A673 (cell line): ENCODE measurements at regions of chr7 and their contacts with region 1.

Region 1: GRCh38 chr7:37901236-37901827 is 15.3 kb downstream of the SFRP4 start:
- DNase-seq: peak; percentile 65
- H3K4me3 ChIP-seq: no peak overlapping the region
- H3K27ac ChIP-seq: no peak overlapping the region
- H3K4me1 ChIP-seq: no peaks in the 10 kb centered on the region
- H3K27me3 ChIP-seq: peaks cover 2% of the 10 kb centered on the region
- CTCF ChIP-seq: peak; percentile 73

Region 2: GRCh38 chr7:37448636-37449361 is 452.5 kb before region 1 on chr7 and contains the start of gene ELMO1:
- CTCF ChIA-PET with region 1: no interaction called
- POLR2A ChIA-PET with region 1: no interaction called
- intact Hi-C with region 1: no loop called
- DNase-seq: peak; percentile 68
- H3K4me3 ChIP-seq: peak within 1 kb of the TSS; percentile 40
- H3K27ac ChIP-seq: no peak within 1 kb of the TSS
- H3K4me1 ChIP-seq: peaks cover 13% of the 10 kb centered on the region
- H3K27me3 ChIP-seq: peaks cover 66% of the 10 kb centered on the region
- CTCF ChIP-seq: peak; percentile 35
- total RNA-seq, gene ELMO1: 0.33 TPM in 1 of 2 replicates, not detected in the other

Region 3: DNA sequence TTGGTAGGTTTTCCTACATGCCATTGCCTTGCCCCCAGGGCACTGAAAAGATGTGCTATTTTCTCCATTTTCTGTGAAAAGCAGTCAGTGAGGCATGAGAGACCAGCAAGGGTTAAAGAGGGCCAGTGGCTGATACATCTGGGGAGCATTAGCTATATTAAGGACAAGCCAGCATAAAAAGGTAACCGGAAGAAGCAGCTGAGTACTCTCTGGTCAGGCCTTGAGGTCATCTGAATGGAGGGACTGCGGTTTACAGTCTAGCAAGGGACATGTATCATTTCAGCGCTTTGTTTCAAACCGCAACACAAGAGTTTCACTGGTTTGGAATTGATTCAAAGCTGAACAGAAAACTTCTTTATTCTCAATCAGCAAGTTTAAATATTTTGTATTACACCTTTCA is 139.5 kb after region 1 on chr7:
- CTCF ChIA-PET with region 1: no interaction called
- POLR2A ChIA-PET with region 1: no interaction called
- intact Hi-C with region 1: loop called (anchors 5 kb)
- DNase-seq: no peak
- H3K4me3 ChIP-seq: no peak overlapping the region
- H3K27ac ChIP-seq: no peak overlapping the region
- H3K4me1 ChIP-seq: no peaks in the 10 kb centered on the region
- H3K27me3 ChIP-seq: no peaks in the 10 kb centered on the region
- CTCF ChIP-seq: no peak

Region 4: DNA sequence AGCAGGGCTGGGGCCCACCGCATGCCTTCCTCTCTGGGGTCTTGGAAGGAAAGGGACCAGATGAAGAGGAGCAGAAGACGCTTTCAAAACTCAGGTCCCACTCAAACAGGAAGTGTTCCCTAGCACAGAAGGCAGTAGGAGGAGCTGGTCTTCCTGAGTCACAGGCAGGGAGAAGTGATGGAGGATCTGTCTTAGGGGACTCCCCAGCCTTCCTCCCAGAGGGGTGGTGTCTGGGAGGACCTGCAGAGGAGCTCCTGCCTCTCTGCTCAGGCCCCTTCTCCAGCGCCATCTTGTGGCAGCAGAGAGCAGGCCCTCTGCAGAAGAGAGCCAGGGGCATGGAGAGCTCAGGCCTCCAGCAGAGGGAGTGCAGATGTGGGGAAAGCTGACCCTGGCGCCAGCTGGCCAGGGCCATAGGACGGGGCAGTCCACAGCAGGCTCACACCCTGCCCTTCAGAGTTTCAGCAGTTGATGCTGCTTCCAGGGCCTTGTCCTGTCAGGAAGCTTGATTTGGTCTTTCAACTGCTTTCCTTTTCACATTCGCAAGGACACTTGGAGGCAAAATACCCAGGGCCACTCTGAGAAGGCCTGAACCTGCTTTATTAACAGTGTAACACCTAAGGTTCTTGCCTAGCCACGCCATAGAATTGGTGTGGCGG is 434.3 kb after region 1 on chr7:
- CTCF ChIA-PET with region 1: interaction called, 9 read pairs
- POLR2A ChIA-PET with region 1: no interaction called
- intact Hi-C with region 1: loop called (anchors 5 kb)
- DNase-seq: peak; percentile 91
- H3K4me3 ChIP-seq: no peak overlapping the region
- H3K27ac ChIP-seq: no peak overlapping the region
- H3K4me1 ChIP-seq: peaks cover 8% of the 10 kb centered on the region
- H3K27me3 ChIP-seq: no peaks in the 10 kb centered on the region
- CTCF ChIP-seq: peak; percentile 98

Region 5: GRCh38 chr7:38369816-38370493 is 468.6 kb after region 1 on chr7:
- CTCF ChIA-PET with region 1: interaction called, 6 read pairs
- POLR2A ChIA-PET with region 1: no interaction called
- intact Hi-C with region 1: loop called (anchors 2 kb)
- DNase-seq: peak; percentile 87
- H3K4me3 ChIP-seq: no peak overlapping the region
- H3K27ac ChIP-seq: no peak overlapping the region
- H3K4me1 ChIP-seq: no peaks in the 10 kb centered on the region
- H3K27me3 ChIP-seq: no peaks in the 10 kb centered on the region
- CTCF ChIP-seq: peak; percentile 96